AG04450 (cell line): ENCODE measurements at regions of chr19 and their contacts with region 1.

Region 1: GRCh38 chr19:39937094-39937720 is 2.8 kb upstream of the FCGBP start:
- DNase-seq: no peak
- H3K4me3 ChIP-seq: no peak overlapping the region
- H3K27ac ChIP-seq: no peak overlapping the region
- H3K27me3 ChIP-seq: no peaks in the 10 kb centered on the region
- CTCF ChIP-seq: no peak

Region 2: DNA sequence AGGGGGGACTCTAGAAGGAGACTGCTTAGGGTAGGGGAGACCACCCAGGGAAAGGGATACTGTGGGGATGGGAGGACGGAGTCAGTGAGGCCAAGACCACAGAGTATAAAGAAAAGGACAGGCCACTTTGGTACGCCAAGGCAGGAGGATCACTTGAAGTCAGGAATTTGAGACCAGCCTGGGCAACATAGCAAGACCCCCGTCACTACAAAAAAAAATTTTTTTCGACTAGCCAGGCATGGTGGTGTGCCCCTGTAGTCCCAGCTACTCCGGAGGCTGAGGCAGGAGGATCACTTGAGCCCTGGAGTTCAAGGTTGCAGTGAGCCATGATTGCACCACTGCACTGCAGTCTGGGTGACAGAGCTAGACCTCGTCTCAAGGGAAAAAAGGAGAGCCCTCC is 699.0 kb before region 1 on chr19:
- CTCF ChIA-PET with region 1: no interaction called
- POLR2A ChIA-PET with region 1: interaction called, 10 read pairs
- DNase-seq: no peak
- H3K4me3 ChIP-seq: no peak overlapping the region
- H3K27ac ChIP-seq: no peak overlapping the region
- H3K27me3 ChIP-seq: peaks cover 23% of the 10 kb centered on the region
- CTCF ChIP-seq: no peak